CD4-positive, alpha-beta T cell (primary cell): ENCODE measurements at regions of chr13 and their contacts with region 1.

Region 1: DNA sequence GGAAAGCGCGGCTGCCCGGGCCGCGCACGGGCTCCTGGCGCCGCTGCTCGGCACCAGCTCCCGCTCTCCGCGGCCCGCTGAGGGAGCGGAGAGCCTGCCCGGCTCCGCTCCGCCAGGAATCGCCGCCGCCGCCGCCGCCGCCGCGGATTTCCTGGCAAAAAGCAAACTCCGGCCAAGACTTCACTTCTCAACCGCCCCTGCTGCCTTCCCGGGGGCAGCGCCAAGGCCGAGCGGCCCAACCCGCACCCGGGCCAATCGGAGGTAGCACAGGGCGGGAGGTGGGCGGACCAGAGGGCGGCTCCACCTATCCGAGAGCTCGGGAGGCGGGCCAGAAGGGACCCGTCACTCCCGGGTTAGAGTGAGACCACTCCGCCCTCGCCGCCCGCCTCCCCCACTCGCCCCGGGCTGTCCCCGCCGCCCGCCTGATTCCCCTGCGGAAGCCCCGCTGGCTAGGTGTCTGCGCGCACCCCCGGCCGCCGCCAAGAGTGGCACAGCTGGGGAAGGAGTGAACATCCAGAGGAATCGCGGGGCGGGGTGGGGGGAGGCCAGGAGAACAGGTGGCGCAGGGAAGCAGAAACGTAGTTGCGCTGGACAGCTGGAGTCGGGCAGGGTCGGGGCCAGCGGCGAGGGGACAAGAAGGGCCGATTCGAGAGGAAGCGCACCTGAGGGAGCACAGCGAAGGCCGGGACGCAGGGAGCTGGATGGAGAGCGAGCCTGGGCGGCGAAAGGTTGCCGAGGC is at the start of gene LNX2:
- DNase-seq: peak; percentile 92 to 98 (median 96)
- ATAC-seq: peak; percentile 83
- H3K4me3 ChIP-seq: peak within 1 kb of the TSS; percentile 77
- H3K4me3 Mint-ChIP-seq: peak within 1 kb of the TSS; percentile 98
- H3K27ac ChIP-seq: peak within 1 kb of the TSS; percentile 97 to 98
- H3K27ac Mint-ChIP-seq: peak within 1 kb of the TSS; percentile 99
- H3K4me1 ChIP-seq: peaks cover 40% of the 10 kb centered on the region
- H3K4me1 Mint-ChIP-seq: peaks cover 72% of the 10 kb centered on the region
- H3K27me3 ChIP-seq: no peaks in the 10 kb centered on the region
- H3K27me3 Mint-ChIP-seq: no peaks in the 10 kb centered on the region
- CTCF ChIP-seq: no peak
- total RNA-seq, gene LNX2: 3.5 to 3.9 TPM

Region 2: DNA sequence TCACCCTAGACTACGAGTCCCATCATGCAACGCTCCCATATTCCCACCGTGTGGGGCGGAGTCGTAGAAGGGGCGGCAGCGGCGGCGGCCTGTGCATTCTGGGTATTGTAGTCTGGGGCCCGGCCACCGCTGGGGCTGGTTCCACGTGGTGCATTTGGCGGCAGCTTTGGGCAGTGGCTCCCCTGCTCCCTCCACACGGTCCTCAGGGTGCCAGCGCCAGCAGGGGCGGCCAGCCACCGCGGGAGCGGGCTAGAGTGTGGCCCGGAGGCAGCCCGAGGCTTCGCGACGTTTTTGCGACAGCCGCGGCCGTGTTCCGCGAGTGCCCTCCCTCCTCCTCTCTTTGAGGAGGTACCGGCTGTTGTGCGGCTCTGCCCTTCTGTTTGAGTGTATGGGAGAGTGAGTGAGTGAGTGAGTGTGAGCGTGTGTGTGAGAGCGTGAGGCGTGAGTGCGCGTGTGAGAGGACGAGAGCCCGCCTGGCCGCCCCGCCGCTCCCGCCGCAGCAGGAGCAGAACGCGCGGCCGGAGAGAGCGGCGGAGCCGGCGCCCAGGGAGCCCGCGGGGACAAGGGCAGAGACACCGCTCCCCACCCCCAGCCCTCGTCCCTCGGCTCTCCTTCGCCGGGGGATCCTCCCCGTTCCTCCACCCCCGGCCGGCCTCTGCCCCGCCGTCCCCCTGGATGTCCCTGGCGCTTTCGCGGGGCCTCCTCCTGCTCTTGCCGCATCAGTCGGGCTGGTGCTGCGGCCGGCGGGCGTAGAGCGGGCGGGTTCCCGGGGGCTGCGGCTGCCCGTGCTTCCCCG is 1366.6 kb before region 1 on chr13 and contains the start of gene CDK8:
- CTCF ChIA-PET with region 1: no interaction called
- POLR2A ChIA-PET with region 1: no interaction called
- intact Hi-C with region 1: loop called in 1 of 2 experiments (anchors 10 kb)
- DNase-seq: peak; percentile 76 to 94 (median 86)
- ATAC-seq: peak; percentile 84
- H3K4me3 ChIP-seq: peak within 1 kb of the TSS; percentile 73
- H3K4me3 Mint-ChIP-seq: peak within 1 kb of the TSS; percentile 94
- H3K27ac ChIP-seq: peak within 1 kb of the TSS; percentile 78 to 84
- H3K27ac Mint-ChIP-seq: peak within 1 kb of the TSS; percentile 84
- H3K4me1 ChIP-seq: peaks cover 12% of the 10 kb centered on the region
- H3K4me1 Mint-ChIP-seq: peaks cover 42% of the 10 kb centered on the region
- H3K27me3 ChIP-seq: no peaks in the 10 kb centered on the region
- H3K27me3 Mint-ChIP-seq: no peaks in the 10 kb centered on the region
- CTCF ChIP-seq: no peak
- total RNA-seq, gene CDK8: 6.0 to 6.7 TPM

Region 3: DNA sequence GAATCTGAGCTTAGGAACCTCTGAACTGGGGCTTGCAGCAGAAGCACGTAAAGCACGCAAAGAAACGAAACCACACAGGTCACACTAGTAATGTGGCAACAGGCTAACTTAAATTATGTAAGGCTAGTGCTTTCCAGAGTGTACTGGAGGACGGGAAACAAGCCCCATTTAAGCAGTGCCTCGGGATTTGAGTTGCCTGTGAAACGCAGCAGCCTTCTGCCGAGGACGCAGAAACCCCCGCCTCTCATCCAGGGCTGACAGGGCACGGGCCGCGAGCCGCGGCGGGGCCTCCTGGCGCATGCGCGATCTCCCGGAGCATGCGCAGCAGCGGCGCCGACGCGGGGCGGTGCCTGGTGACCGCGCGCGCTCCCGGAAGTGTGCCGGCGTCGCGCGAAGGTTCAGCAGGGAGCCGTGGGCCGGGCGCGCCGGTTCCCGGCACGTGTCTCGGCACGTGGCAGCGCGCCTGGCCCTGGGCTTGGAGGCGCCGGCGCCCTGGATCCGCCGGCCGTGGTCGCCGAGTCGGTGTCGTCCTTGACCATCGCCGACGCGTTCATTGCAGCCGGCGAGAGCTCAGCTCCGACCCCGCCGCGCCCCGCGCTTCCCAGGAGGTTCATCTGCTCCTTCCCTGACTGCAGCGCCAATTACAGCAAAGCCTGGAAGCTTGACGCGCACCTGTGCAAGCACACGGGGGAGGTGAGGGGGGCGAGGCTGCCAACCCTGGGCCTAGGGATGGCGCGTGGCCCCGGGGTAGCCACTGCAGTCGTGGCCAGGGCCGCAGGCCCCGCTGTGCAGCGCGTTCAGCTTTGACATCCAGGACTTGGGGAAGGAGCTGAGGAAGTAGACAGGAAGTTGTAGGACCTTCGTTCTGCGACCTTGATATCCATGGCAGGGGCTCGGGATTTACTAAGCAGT is 196.0 kb before region 1 on chr13 and contains the start of gene GTF3A:
- CTCF ChIA-PET with region 1: interaction called, 3 read pairs
- POLR2A ChIA-PET with region 1: interaction called, 94 read pairs
- intact Hi-C with region 1: loop called (anchors 2 kb)
- DNase-seq: peak; percentile 69 to 97 (median 87)
- ATAC-seq: peak; percentile 53
- H3K4me3 ChIP-seq: peak within 1 kb of the TSS; percentile 79
- H3K4me3 Mint-ChIP-seq: peak within 1 kb of the TSS; percentile 90
- H3K27ac ChIP-seq: peak within 1 kb of the TSS; percentile 91 to 95
- H3K27ac Mint-ChIP-seq: peak within 1 kb of the TSS; percentile 95
- H3K4me1 ChIP-seq: peaks cover 50% of the 10 kb centered on the region
- H3K4me1 Mint-ChIP-seq: peaks cover 39% of the 10 kb centered on the region
- H3K27me3 ChIP-seq: no peaks in the 10 kb centered on the region
- H3K27me3 Mint-ChIP-seq: no peaks in the 10 kb centered on the region
- CTCF ChIP-seq: no peak
- total RNA-seq, gene GTF3A: 129 to 132 TPM

Region 4: DNA sequence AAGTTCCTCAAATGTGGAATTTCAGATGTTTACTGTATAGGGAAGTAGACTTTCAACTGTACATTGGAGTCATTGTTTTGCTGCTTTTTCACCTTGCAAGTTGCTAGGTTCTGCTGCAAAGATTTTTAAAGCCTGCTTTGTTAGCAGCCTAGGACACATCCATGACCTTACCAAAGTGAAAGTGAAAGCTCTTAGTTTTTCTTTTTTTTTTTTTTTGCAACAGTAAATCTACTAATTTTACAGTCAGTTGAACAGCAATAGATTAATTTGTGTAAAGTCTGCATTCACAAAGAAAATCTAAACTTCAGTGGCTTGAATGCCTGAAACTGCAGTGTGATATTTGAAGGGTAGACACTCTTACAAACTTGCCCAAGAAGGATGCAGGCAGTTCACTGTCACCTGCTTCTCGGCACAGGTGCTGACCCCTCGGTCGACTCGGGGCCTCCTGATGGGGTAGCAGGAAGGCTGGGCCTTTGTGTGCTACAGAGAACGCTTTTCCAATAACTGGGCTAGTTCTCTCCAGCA is 165.2 kb before region 1 on chr13:
- CTCF ChIA-PET with region 1: interaction called, 19 read pairs
- POLR2A ChIA-PET with region 1: interaction called, 65 read pairs
- intact Hi-C with region 1: loop called (anchors 1 kb)
- DNase-seq: peak in 3 of 14 experiments; percentile 30 to 41 (median 38)
- ATAC-seq: no peak
- H3K4me3 ChIP-seq: peak overlapping the region; percentile 64
- H3K4me3 Mint-ChIP-seq: peak overlapping the region; percentile 94
- H3K27ac ChIP-seq: peak overlapping the region; percentile 55 to 81
- H3K27ac Mint-ChIP-seq: peak overlapping the region; percentile 94
- H3K4me1 ChIP-seq: peaks cover 29% of the 10 kb centered on the region
- H3K4me1 Mint-ChIP-seq: peaks cover 42% of the 10 kb centered on the region
- H3K27me3 ChIP-seq: no peaks in the 10 kb centered on the region
- H3K27me3 Mint-ChIP-seq: no peaks in the 10 kb centered on the region
- CTCF ChIP-seq: no peak

Region 5: GRCh38 chr13:27559714-27560113 is 60.8 kb before region 1 on chr13:
- CTCF ChIA-PET with region 1: interaction called, 3 read pairs
- POLR2A ChIA-PET with region 1: interaction called, 25 read pairs
- intact Hi-C with region 1: no loop called
- DNase-seq: peak in 3 of 14 experiments; percentile 44 to 58 (median 49)
- ATAC-seq: peak; percentile 57
- H3K4me3 ChIP-seq: no peak overlapping the region
- H3K4me3 Mint-ChIP-seq: no peak overlapping the region
- H3K27ac ChIP-seq: no peak overlapping the region
- H3K27ac Mint-ChIP-seq: peak overlapping the region; percentile 66
- H3K4me1 ChIP-seq: no peaks in the 10 kb centered on the region
- H3K4me1 Mint-ChIP-seq: peaks cover 21% of the 10 kb centered on the region
- H3K27me3 ChIP-seq: no peaks in the 10 kb centered on the region
- H3K27me3 Mint-ChIP-seq: no peaks in the 10 kb centered on the region
- CTCF ChIP-seq: no peak

Region 6: GRCh38 chr13:27599845-27600553 is 20.5 kb before region 1 on chr13:
- CTCF ChIA-PET with region 1: no interaction called
- POLR2A ChIA-PET with region 1: interaction called, 10 read pairs
- intact Hi-C with region 1: no loop called
- DNase-seq: no peak
- ATAC-seq: no peak
- H3K4me3 ChIP-seq: no peak overlapping the region
- H3K4me3 Mint-ChIP-seq: no peak overlapping the region
- H3K27ac ChIP-seq: no peak overlapping the region
- H3K27ac Mint-ChIP-seq: no peak overlapping the region
- H3K4me1 ChIP-seq: no peaks in the 10 kb centered on the region
- H3K4me1 Mint-ChIP-seq: peaks cover 15% of the 10 kb centered on the region
- H3K27me3 ChIP-seq: no peaks in the 10 kb centered on the region
- H3K27me3 Mint-ChIP-seq: no peaks in the 10 kb centered on the region
- CTCF ChIP-seq: no peak

Region 7: DNA sequence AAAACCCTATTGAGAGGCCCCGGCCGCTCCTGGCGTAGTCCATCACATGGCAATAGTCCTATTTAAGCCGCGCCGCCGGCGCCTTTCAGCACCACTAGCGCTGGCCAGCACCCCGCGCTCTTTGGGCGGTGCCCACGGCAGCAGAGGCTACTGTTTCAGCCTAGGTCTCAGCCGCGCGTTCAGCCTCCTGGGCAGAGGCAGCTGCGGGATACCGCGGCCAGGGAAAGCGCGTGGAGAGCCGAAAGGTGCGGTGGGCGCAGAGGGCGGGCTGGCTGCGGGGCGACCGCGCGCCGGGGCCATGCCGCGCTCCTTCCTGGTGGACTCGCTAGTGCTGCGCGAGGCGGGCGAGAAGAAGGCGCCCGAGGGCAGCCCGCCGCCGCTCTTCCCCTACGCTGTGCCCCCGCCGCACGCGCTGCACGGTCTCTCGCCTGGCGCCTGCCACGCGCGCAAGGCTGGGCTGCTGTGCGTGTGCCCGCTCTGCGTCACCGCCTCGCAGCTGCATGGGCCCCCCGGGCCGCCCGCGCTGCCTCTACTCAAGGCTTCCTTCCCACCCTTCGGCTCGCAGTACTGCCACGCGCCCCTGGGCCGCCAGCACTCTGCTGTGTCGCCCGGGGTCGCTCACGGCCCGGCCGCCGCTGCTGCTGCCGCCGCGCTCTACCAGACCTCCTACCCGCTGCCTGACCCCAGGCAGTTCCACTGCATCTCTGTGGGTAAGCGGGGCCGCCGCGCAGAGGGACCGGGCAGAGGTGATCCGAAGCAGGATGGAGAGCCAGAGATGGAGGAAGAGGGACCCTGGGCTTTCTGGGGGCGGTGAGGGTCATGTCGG is 172.1 kb after region 1 on chr13 and contains the start of gene GSX1:
- CTCF ChIA-PET with region 1: no interaction called
- POLR2A ChIA-PET with region 1: no interaction called
- intact Hi-C with region 1: loop called in 1 of 2 experiments (anchors 5 kb)
- DNase-seq: peak in 11 of 14 experiments; percentile 7 to 68 (median 24)
- ATAC-seq: peak; percentile 75
- H3K4me3 ChIP-seq: peak within 1 kb of the TSS; percentile 57
- H3K4me3 Mint-ChIP-seq: peak within 1 kb of the TSS; percentile 84
- H3K27ac ChIP-seq: no peak within 1 kb of the TSS
- H3K27ac Mint-ChIP-seq: no peak within 1 kb of the TSS
- H3K4me1 ChIP-seq: peaks cover 50% of the 10 kb centered on the region
- H3K4me1 Mint-ChIP-seq: peaks cover 46% of the 10 kb centered on the region
- H3K27me3 ChIP-seq: peaks cover 83 to 88% of the 10 kb centered on the region in 2 experiments
- H3K27me3 Mint-ChIP-seq: peaks cover 83% of the 10 kb centered on the region
- CTCF ChIP-seq: no peak
- total RNA-seq, gene GSX1: not detected